ENCODE measurements at regions of chr2 and their contacts with region 1.

Region 1: DNA sequence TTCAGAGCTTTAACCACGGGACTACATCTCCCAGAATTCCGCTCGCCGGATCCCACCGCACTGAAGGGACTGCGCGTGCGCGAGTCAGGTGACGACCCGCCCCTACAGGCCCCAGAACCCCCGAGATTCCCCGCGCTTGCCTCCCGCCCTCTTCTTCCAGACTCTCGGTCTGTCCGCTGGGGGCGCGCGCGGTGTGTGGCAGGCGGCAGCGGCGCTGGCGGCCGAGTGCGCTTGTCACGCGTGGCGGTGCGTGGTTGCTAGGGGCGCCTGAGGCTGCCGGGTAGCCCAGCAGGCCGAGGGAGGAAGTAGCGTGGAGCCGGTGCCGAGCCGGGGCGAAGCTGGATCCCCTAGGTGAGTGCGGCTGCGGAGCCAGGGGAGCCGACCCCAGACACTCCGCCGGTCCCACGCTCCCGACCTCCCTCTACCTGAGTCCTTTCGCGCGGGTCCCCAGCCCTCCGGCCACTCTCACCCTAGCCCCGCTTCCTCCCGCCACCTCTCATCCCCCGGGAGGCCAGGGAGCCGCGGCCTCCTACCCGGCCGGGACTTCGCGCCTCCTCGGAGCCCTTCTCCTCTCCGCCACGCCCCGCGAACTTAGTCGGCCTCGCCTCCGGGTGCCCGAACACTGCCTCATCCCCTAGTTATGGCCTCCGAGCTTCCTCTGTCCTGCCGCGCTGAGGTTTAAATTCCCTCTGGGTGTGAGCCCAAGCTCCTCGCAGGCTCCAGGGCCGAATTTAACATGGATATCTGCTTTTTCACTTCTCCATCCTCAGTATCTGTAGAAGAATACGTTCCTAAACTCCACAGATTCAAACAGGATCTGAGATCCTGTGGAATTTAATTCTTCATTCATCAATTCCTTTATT is at the start of gene TTLL4:
- DNase-seq: peak; percentile 98
- ATAC-seq: peak; percentile 98
- H3K4me3 Mint-ChIP-seq: peak within 1 kb of the TSS; percentile 86
- H3K27ac Mint-ChIP-seq: peak within 1 kb of the TSS; percentile 77
- H3K4me1 Mint-ChIP-seq: peaks cover 17% of the 10 kb centered on the region
- H3K27me3 Mint-ChIP-seq: peaks cover 1% of the 10 kb centered on the region
- CTCF ChIP-seq: peak; percentile 87
- total RNA-seq, gene TTLL4: 32.2 to 36.6 TPM

Region 2: DNA sequence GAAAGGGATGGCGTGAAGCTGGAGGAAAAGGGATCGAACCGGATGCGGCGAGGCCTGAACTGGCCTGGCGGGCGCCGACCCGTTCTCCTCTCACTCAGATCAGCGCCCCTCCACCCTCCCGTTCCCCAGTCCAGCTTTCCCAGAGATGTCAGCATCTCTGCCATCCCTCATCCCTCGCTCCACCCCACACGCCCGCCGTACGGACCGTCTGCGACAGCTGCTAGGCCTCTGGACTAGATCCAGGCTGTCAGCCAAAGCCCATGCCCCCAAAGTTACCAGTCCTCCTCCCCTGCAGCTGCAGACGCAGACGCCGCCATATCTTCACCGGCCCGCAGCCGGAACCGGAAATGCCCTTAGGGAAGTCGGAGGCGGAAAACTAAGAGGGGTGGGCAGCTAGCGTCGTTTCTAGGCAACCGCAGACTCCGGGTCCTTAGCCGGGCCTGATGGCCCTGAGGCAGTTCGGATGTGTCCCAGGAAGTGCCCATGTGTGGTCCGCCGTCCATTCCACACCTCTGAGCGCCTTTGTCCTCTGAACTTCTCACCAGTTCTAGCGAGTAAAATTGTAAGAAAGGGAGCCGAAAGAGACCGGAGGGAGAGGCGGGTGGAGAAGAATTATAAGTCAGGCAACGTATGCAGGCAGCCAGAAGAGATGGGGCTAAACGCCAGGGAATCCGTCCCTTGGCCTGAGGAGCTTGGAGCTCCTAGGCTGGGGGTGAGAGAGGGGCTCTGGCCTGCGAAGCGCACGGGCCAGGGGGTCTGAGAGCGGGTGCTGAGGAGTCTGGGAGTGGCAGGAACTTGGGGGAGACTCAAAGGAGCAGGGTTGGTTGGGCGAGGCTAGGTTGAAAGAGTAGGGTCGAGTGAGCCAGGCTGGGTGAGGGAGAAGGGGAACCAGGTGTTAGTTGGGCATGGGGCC is 39.0 kb before region 1 on chr2 and contains the starts of genes RNF25 and STK36:
- CTCF ChIA-PET with region 1: interaction called, 16 read pairs
- POLR2A ChIA-PET with region 1: interaction called, 3 read pairs
- intact Hi-C with region 1: no loop called
- DNase-seq: peak; percentile 90
- ATAC-seq: peak; percentile 98
- H3K4me3 Mint-ChIP-seq: peak within 1 kb of the TSS; percentile 96
- H3K27ac Mint-ChIP-seq: peak within 1 kb of the TSS; percentile 96
- H3K4me1 Mint-ChIP-seq: peaks cover 16% of the 10 kb centered on the region
- H3K27me3 Mint-ChIP-seq: no peaks in the 10 kb centered on the region
- CTCF ChIP-seq: no peak
- total RNA-seq, gene RNF25: 14.7 to 17.0 TPM
- total RNA-seq, gene STK36: 11.6 to 14.9 TPM

Region 3: GRCh38 chr2:218727502-218728165 is 16.7 kb after region 1 on chr2:
- CTCF ChIA-PET with region 1: interaction called, 17 read pairs
- POLR2A ChIA-PET with region 1: interaction called, 7 read pairs
- intact Hi-C with region 1: no loop called
- DNase-seq: no peak
- ATAC-seq: no peak
- H3K4me3 Mint-ChIP-seq: no peak overlapping the region
- H3K27ac Mint-ChIP-seq: no peak overlapping the region
- H3K4me1 Mint-ChIP-seq: peaks cover 16% of the 10 kb centered on the region
- H3K27me3 Mint-ChIP-seq: no peaks in the 10 kb centered on the region
- CTCF ChIP-seq: peak; percentile 58

Region 4: GRCh38 chr2:218856167-218856895 is 145.4 kb after region 1 on chr2:
- CTCF ChIA-PET with region 1: no interaction called
- POLR2A ChIA-PET with region 1: no interaction called
- intact Hi-C with region 1: no loop called
- DNase-seq: no peak
- ATAC-seq: no peak
- H3K4me3 Mint-ChIP-seq: no peak overlapping the region
- H3K27ac Mint-ChIP-seq: no peak overlapping the region
- H3K4me1 Mint-ChIP-seq: peaks cover 10% of the 10 kb centered on the region
- H3K27me3 Mint-ChIP-seq: peaks cover 76% of the 10 kb centered on the region
- CTCF ChIP-seq: no peak